Dendritic cell treated with granulocyte-macrophage colony-stimulating factor and Interleukin-4, amounts not matched to agents 40 ng/mL and 50 ng/mL, for 4 days (primary cell): ENCODE measurements at regions of chr5 and their contacts with region 1.

Region 1: GRCh38 chr5:96662725-96663513 is 743 bp downstream of the CAST start:
- H3K4me3 Mint-ChIP-seq: peak overlapping the region; percentile 88
- H3K27ac Mint-ChIP-seq: peak overlapping the region; percentile 97
- H3K4me1 Mint-ChIP-seq: peaks cover 42% of the 10 kb centered on the region
- H3K27me3 Mint-ChIP-seq: no peaks in the 10 kb centered on the region

Region 2: DNA sequence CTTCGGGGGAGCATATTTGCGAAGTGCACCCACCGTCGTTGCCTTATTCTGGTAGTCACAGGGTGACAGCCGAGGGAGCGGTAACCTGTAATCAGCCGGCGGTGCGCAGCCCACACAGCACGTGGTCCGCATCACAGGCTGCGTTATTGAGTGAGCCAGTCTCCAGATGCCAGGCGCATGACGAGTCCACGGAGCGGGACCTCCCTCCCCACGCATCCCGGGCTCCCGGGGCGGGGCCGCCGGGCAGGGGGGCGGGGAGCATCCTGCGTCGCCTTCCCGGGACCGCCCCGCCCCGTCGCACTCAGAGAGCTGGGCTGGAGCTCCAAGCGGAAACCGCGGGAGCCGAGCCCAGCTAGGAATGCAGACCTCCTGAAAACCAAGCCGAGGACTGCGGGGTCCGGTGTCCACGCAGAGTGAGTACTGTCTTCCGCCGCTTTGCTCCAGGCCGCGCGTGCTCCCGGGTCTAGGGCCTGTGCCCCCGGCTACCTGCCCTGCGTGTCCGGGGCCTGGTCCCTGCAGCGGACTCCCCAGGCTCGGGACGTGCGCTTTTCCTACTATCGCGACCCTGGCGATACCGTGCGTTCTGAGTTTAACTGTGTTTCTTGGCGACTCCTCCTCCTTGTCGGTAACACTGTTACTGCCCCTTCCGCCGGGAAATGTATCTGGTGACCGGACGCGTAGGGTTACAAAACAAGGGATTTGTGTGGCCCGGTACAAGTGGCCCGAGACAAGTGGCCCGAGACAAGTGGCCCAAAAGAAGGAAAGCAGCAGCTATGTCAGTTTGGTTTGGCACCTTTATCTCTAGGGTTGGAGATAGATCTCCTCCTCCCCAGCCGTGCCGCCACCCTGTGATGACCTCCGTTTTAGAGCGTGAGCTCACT is 39.8 kb after region 1 on chr5:
- intact Hi-C with region 1: loop called (anchors 2 kb)
- H3K4me3 Mint-ChIP-seq: peak overlapping the region; percentile 92
- H3K27ac Mint-ChIP-seq: peak overlapping the region; percentile 88
- H3K4me1 Mint-ChIP-seq: peaks cover 41% of the 10 kb centered on the region
- H3K27me3 Mint-ChIP-seq: no peaks in the 10 kb centered on the region

Region 3: GRCh38 chr5:96924016-96924443 is 261.1 kb after region 1 on chr5:
- intact Hi-C with region 1: no loop called
- H3K4me3 Mint-ChIP-seq: no peak overlapping the region
- H3K27ac Mint-ChIP-seq: peak overlapping the region; percentile 18
- H3K4me1 Mint-ChIP-seq: peaks cover 16% of the 10 kb centered on the region
- H3K27me3 Mint-ChIP-seq: no peaks in the 10 kb centered on the region